ENCODE measurements at regions of chr17 and their contacts with region 1.

Region 1: DNA sequence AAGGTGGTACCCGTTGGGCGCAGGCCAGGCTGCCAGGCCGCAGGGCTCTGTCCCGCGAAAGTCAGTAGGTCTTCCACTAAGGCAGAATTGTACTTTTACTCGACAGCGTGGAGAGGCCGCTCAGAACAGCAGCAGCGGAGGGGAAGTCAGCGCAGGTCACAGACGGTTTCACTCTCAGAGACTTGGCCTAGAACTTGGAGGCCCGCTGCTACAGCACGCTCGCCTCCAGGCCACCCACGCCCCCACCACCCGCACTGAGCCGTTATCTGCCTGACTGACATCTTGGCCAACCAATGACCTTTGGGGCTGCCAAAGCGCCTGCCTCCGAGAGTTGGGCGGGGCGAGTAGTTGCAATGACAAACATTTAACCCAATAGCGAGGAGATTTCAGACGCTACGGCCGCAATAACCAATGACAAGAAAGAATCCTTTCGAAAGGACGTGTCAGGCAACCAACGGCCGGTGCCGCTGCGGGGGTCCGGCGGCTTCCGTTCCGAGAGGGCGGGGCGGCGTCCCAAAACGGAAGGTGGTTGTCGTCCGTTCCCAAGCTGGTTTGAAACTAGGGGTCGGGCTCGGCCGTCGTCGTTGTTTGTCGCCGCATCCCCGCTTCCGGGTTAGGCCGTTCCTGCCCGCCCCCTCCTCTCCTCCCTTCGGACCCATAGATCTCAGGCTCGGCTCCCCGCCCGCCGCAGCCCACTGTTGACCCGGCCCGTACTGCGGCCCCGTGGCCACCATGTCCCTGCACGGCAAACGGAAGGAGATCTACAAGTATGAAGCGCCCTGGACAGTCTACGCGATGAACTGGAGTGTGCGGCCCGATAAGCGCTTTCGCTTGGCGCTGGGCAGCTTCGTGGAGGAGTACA is at the start of gene DCAF7:
- DNase-seq: peak; percentile 98 to 99
- H3K4me3 ChIP-seq: peak within 1 kb of the TSS; percentile 75
- H3K27ac ChIP-seq: peak within 1 kb of the TSS; percentile 62
- H3K4me1 ChIP-seq: peaks cover 22% of the 10 kb centered on the region
- H3K27me3 ChIP-seq: no peaks in the 10 kb centered on the region
- CTCF ChIP-seq: no peak
- total RNA-seq, gene DCAF7: 62.2 and 78.9 TPM in 2 replicates

Region 2: GRCh38 chr17:63434876-63435684 is 115.1 kb before region 1 on chr17:
- CTCF ChIA-PET with region 1: interaction called, 12 read pairs
- POLR2A ChIA-PET with region 1: no interaction called
- intact Hi-C with region 1: no loop called
- DNase-seq: peak; percentile 68 to 89
- H3K4me3 ChIP-seq: no peak overlapping the region
- H3K27ac ChIP-seq: no peak overlapping the region
- H3K4me1 ChIP-seq: peaks cover 11% of the 10 kb centered on the region
- H3K27me3 ChIP-seq: no peaks in the 10 kb centered on the region
- CTCF ChIP-seq: no peak; the same call in 1 of the 2 replicates

Measured in PC-9 (cell line).